Activated naive CD4-positive, alpha-beta T cell treated with anti-CD3 and anti-CD28 coated beads for 36 hours (primary cell): ENCODE measurements at regions of chr1 and their contacts with region 1.

Region 1: DNA sequence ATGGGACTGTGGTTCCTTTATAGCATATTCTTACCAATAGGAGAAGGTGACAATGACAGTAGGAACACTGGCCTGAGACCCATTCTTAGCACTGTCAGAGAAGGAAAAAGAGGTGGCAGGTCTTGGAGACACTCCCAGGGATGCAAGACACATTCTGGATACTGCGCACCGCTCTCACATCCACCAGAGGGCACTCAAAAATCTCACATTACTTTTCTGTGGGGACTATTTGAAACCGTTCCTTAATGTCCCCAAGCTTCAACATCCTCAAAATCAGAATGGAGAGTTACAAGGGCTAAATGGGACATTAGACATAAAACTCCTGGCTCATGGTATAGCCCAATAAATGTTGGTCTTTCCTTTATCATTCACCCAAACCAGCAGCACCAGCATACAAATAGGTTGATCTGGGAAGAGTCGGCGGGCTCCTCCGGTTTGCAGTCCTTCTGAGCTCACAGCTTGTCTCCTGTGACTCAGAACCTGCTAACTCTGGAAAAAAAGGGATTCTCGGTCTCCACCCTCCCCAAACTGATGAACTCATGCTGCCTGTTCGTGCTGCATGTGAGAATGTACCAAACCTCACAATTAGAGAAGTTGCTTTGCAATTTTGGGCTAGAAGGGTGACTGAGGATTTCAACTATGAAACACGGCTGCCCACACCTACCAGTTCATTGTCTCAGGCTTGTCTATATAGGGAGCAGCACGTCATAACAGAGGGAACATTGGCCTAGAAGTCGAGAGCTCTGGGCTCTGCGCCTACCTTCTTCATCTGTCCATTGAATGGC is 40.2 kb downstream of the IL12RB2 start:
- DNase-seq: peak; percentile 48
- H3K4me3 Mint-ChIP-seq: no peak overlapping the region
- H3K27ac Mint-ChIP-seq: peak overlapping the region; percentile 10
- H3K4me1 Mint-ChIP-seq: peaks cover 31% of the 10 kb centered on the region
- H3K27me3 Mint-ChIP-seq: no peaks in the 10 kb centered on the region

Region 2: DNA sequence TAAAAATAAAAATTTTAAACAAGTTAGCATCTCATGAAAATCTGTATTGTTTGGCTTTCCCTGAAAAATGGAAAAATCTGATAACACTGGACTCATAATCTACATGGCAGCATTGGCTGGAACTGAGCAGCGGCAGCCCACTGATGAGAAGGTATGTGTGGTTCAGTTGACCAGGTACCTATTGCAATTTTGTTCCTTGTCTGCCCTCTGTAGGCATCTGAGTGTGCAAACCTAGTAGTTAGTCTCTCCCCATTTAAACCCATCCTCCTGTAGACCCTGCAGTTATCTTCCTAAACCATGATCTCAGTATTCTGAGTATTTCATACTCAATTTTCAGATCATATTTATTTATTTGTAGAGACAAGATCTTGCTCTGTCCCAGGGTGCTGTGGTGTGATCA is 141.8 kb after region 1 on chr1:
- CTCF ChIA-PET with region 1: interaction called, 4 read pairs
- intact Hi-C with region 1: loop called (anchors 2 kb)
- DNase-seq: peak; percentile 40
- H3K4me3 Mint-ChIP-seq: no peak overlapping the region
- H3K27ac Mint-ChIP-seq: no peak overlapping the region
- H3K4me1 Mint-ChIP-seq: peaks cover under 1% of the 10 kb centered on the region
- H3K27me3 Mint-ChIP-seq: no peaks in the 10 kb centered on the region

Region 3: DNA sequence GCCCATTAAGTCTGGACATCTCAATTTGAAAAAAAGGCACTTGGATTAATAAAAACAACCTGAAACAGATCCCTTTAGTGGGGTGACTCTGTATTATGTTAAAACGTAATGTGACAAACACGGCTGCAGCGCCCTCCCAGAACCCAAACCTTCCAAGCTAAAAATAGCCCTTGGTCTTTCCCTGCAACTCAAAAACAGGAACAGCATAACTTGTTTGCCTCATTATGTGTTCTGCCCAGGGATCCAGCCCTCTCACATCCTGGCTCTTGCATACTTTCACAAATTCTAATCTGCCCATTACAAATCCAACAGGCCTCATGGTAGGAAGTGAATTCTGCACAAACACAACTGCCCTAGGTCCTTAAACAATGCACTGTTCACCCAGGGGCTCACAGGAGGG is 242.4 kb after region 1 on chr1:
- CTCF ChIA-PET with region 1: no interaction called
- intact Hi-C with region 1: no loop called
- DNase-seq: no peak
- H3K4me3 Mint-ChIP-seq: no peak overlapping the region
- H3K27ac Mint-ChIP-seq: no peak overlapping the region
- H3K4me1 Mint-ChIP-seq: no peaks in the 10 kb centered on the region
- H3K27me3 Mint-ChIP-seq: no peaks in the 10 kb centered on the region

Region 4: DNA sequence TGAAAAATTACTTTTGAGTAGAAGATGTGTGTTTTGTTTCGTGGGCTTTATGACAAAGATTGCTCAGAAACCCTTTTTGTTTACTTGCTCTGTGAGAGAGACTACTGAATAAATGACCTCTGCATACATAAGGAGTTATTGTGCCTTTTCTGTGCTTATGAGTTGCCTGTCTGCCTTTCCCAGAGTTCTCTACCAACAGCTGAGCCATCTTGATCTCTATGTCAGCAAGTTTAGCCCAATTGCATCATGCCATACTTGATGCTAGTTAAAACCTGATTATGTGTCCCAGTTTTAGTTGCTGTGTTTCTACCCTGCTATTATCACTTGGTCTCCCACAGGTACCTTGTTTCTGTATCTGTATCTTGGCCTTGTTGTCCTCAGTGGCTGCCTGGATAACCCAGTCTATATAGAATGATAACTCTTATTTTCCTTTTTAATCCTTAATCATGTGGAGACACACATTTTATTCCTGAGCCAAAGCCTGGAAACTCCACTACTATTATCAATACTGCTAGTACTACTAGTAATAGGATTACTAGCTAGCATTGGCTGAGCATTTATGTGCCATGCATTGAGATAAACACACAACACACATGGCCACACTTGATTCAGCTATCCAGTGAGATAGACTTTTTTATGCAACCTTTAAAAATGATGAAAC is 514.1 kb after region 1 on chr1:
- CTCF ChIA-PET with region 1: no interaction called
- intact Hi-C with region 1: no loop called
- DNase-seq: no peak
- H3K4me3 Mint-ChIP-seq: no peak overlapping the region
- H3K27ac Mint-ChIP-seq: no peak overlapping the region
- H3K4me1 Mint-ChIP-seq: no peaks in the 10 kb centered on the region
- H3K27me3 Mint-ChIP-seq: peaks cover 19% of the 10 kb centered on the region